ENCODE measurements at regions of chr13 and their contacts with region 1.

Region 1: GRCh38 chr13:33610471-33611015 is 207.4 kb upstream of the RFC3 start:
- DNase-seq: peak; percentile 87
- H3K4me3 Mint-ChIP-seq: peak overlapping the region; percentile 79
- H3K27ac Mint-ChIP-seq: peak overlapping the region; percentile 94
- H3K4me1 Mint-ChIP-seq: peaks cover 50% of the 10 kb centered on the region
- H3K27me3 Mint-ChIP-seq: no peaks in the 10 kb centered on the region

Region 2: GRCh38 chr13:32427852-32428580 is 1182.5 kb before region 1 on chr13 and contains the start of gene N4BP2L1:
- CTCF ChIA-PET with region 1: no interaction called
- POLR2A ChIA-PET with region 1: no interaction called
- intact Hi-C with region 1: loop called (anchors 5 kb)
- DNase-seq: peak; percentile 94
- H3K4me3 Mint-ChIP-seq: peak within 1 kb of the TSS; percentile 88
- H3K27ac Mint-ChIP-seq: peak within 1 kb of the TSS; percentile 96
- H3K4me1 Mint-ChIP-seq: peaks cover 38% of the 10 kb centered on the region
- H3K27me3 Mint-ChIP-seq: no peaks in the 10 kb centered on the region
- total RNA-seq, gene N4BP2L1: 22.1 to 24.0 TPM

Region 3: DNA sequence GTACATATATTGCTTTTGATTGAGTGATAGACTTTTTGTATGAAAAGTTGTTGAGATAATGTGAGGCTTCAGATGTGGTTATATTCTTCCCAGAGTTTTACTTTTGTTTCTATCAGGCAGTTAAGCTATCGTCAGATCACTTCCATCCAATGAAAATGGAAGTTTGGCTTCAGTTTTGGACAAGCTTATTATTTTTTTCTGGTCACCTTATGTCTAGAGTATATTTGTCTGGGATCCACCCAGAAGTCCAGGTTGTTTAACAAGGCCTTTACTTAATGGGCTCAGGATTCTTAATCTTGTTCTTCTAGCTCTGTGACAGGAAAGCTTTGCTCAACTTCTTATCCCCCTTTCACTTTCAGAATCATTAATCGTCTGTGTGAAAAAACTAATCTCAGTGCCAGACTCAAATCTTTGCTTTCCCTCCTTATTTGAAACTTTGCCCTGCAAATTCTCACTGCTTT is 873.4 kb before region 1 on chr13:
- CTCF ChIA-PET with region 1: no interaction called
- POLR2A ChIA-PET with region 1: no interaction called
- intact Hi-C with region 1: loop called (anchors 10 kb)
- DNase-seq: no peak
- H3K4me3 Mint-ChIP-seq: peak overlapping the region; percentile 72
- H3K27ac Mint-ChIP-seq: peak overlapping the region; percentile 83
- H3K4me1 Mint-ChIP-seq: peaks cover 35% of the 10 kb centered on the region
- H3K27me3 Mint-ChIP-seq: no peaks in the 10 kb centered on the region

Region 4: GRCh38 chr13:33483471-33483870 is 127.1 kb before region 1 on chr13:
- CTCF ChIA-PET with region 1: no interaction called
- POLR2A ChIA-PET with region 1: no interaction called
- intact Hi-C with region 1: no loop called
- DNase-seq: no peak
- H3K4me3 Mint-ChIP-seq: no peak overlapping the region
- H3K27ac Mint-ChIP-seq: no peak overlapping the region
- H3K4me1 Mint-ChIP-seq: no peaks in the 10 kb centered on the region
- H3K27me3 Mint-ChIP-seq: peaks cover 11% of the 10 kb centered on the region

Region 5: DNA sequence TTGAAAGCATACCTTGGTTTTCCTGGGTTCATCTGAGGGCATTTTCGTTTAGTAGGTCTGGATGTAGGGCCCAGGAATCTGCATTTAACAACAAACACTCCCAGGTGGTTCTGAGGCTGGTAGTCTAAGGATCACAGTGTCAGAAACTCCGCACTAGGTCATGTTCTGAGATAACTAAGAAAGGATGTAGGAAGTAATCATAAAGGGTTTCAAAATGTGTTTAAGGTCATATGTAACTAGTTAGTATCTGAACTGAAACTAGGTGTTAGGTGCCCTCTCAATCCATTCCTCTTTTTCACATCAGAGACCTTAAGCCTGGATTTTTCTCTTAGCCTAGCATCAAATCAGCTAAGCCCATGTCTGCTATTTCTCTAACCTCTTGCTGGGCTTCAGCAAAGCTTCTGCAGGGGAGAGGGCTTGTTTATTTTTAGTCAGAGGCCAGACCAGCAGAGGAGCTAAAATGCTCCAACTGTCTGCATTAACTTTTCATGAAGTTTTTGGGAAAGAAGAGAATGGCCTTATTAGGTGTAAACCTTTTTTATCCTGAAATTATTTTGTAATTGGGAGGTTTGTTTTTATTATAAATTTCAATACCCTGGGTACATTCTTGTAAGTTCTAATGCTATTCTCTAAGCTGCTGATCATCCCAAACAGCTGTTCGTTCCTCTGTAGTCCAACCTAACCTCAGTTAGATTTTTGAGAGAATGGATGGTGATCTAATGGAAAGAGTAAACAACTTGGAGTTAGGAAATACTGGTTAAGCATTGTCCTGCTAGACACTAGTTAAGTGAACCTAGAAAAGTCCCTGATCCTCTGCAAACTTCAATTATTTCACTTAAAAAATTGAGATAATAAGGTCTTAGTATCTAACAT is 55.4 kb before region 1 on chr13:
- CTCF ChIA-PET with region 1: no interaction called
- POLR2A ChIA-PET with region 1: no interaction called
- intact Hi-C with region 1: loop called (anchors 1 kb)
- DNase-seq: peak; percentile 14
- H3K4me3 Mint-ChIP-seq: no peak overlapping the region
- H3K27ac Mint-ChIP-seq: no peak overlapping the region
- H3K4me1 Mint-ChIP-seq: peaks cover 21% of the 10 kb centered on the region
- H3K27me3 Mint-ChIP-seq: no peaks in the 10 kb centered on the region

Region 6: DNA sequence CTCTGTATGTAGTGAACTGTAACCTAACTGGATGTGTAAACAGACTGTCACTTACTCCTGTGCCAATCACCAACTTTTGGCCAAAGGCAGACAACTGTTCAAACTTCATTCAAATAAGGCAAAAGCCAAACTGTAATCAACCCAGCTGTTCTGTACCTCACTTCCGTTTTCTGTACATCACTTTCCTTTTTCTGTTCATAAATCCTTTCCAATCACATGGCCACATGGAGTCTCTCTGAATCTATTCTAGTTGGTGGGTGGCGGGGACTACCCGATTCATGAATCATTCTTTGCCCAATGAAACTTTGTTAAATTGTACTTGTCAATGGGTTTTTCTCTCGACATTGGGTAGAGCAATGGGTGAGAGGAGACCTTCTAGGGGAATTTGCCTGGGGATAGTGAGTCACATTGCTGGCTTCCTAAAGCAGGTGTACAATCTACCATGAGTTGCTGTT is 29.1 kb after region 1 on chr13:
- CTCF ChIA-PET with region 1: interaction called, 9 read pairs
- POLR2A ChIA-PET with region 1: interaction called, 3 read pairs
- intact Hi-C with region 1: loop called (anchors 1 kb)
- DNase-seq: peak; percentile 82
- H3K4me3 Mint-ChIP-seq: no peak overlapping the region
- H3K27ac Mint-ChIP-seq: peak overlapping the region; percentile 92
- H3K4me1 Mint-ChIP-seq: peaks cover 57% of the 10 kb centered on the region
- H3K27me3 Mint-ChIP-seq: no peaks in the 10 kb centered on the region

Region 7: DNA sequence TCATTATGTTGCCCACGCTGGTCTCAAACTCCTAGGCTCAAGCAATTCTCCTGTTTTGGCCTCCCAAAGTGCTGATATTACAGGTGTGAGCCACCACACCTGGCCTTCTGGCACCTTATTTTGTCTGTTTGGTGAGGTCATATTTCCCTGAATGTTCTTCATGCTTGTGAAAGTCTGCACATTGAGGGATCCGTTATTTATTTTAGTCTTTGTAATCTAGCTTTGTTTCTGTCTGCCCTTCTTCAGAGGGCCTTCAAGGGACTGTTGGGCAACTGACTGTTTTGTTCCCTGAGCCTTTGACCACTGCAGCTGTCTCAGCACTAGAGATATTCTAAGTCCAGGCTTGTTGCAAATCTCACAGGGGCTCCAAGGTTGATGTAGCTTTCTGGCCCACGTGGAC is 96.9 kb after region 1 on chr13:
- CTCF ChIA-PET with region 1: no interaction called
- POLR2A ChIA-PET with region 1: no interaction called
- intact Hi-C with region 1: no loop called
- DNase-seq: no peak
- H3K4me3 Mint-ChIP-seq: no peak overlapping the region
- H3K27ac Mint-ChIP-seq: no peak overlapping the region
- H3K4me1 Mint-ChIP-seq: no peaks in the 10 kb centered on the region
- H3K27me3 Mint-ChIP-seq: peaks cover 16% of the 10 kb centered on the region

Region 8: DNA sequence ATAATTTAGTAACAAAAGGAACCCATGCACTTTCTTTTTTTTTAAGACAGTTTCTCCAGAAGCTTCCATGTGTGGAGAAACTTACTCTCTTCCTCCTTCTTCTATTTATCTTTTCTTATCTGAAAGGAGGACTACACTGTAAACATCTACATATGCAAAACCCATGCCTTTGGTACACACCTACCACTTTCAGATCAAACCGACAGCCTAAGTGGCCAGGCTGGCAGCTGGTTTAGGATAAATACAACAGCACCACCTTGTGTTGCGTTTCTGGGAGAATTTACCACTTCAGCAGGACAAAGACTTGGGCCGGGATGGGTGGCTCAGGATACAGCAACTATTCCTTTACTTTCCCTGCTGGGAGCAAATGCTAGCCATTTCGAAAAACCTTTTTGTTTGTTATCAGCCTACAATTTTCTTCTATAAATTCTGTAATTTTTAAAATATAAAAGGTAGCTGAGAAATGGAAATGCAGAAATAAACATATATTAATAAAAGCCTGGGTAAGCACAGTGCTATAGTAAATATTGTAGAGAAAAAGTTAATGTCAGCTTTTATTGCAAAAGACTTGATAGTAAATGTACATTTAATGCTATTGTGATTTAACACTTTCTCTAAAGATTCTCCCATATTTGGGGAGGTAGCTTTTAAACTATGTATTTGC is 113.4 kb after region 1 on chr13:
- CTCF ChIA-PET with region 1: interaction called, 6 read pairs
- POLR2A ChIA-PET with region 1: interaction called, 5 read pairs
- intact Hi-C with region 1: loop called (anchors 1 kb)
- DNase-seq: peak; percentile 78
- H3K4me3 Mint-ChIP-seq: no peak overlapping the region
- H3K27ac Mint-ChIP-seq: peak overlapping the region; percentile 57
- H3K4me1 Mint-ChIP-seq: peaks cover 37% of the 10 kb centered on the region
- H3K27me3 Mint-ChIP-seq: no peaks in the 10 kb centered on the region

Region 9: DNA sequence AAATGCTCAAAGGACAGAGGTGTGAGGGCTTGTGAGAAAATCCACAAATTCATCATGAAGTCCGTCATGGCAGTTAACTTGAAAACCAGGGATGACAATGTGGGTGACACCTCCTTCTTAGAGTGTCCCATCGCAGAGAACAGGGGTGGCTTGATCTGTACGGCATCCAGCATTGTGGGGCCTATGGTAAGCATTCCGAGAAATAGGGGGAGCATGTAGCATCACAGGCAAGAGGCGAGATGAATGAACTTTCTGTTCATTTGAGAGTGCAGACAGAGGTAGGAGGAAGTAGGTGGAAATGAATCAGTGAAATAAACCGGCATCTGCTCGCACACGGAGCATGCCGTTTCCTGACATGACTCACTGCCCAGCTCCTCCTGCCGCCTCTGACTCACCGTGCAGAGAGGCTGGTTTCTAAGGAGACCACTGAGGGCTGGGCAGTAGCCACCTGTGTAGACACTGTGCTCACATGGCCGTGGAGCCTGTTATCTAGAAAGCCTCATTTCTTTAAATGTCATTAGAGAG is 546.4 kb after region 1 on chr13:
- CTCF ChIA-PET with region 1: no interaction called
- POLR2A ChIA-PET with region 1: no interaction called
- intact Hi-C with region 1: loop called (anchors 2 kb)
- DNase-seq: peak; percentile 74
- H3K4me3 Mint-ChIP-seq: peak overlapping the region; percentile 28
- H3K27ac Mint-ChIP-seq: peak overlapping the region; percentile 10
- H3K4me1 Mint-ChIP-seq: peaks cover 14% of the 10 kb centered on the region
- H3K27me3 Mint-ChIP-seq: peaks cover 10% of the 10 kb centered on the region

Measured in activated CD4-positive, alpha-beta memory T cell treated with anti-CD3 and anti-CD28 coated beads for 36 hours (primary cell).